ENCODE measurements at regions of chr11 and their contacts with region 1.

Region 1: GRCh38 chr11:59542142-59542810 is 30.9 kb downstream of the OR4D9 start:
- DNase-seq: no peak
- H3K4me3 Mint-ChIP-seq: no peak overlapping the region
- H3K27ac Mint-ChIP-seq: no peak overlapping the region
- H3K4me1 Mint-ChIP-seq: peaks cover 11% of the 10 kb centered on the region
- H3K27me3 Mint-ChIP-seq: no peaks in the 10 kb centered on the region

Region 2: GRCh38 chr11:59263225-59263894 is 278.9 kb before region 1 on chr11:
- CTCF ChIA-PET with region 1: no interaction called
- intact Hi-C with region 1: no loop called
- DNase-seq: peak; percentile 27
- H3K4me3 Mint-ChIP-seq: no peak overlapping the region
- H3K27ac Mint-ChIP-seq: no peak overlapping the region
- H3K4me1 Mint-ChIP-seq: no peaks in the 10 kb centered on the region
- H3K27me3 Mint-ChIP-seq: no peaks in the 10 kb centered on the region

Region 3: GRCh38 chr11:59401262-59401552 is 141.1 kb before region 1 on chr11:
- CTCF ChIA-PET with region 1: no interaction called
- intact Hi-C with region 1: no loop called
- DNase-seq: no peak
- H3K4me3 Mint-ChIP-seq: no peak overlapping the region
- H3K27ac Mint-ChIP-seq: no peak overlapping the region
- H3K4me1 Mint-ChIP-seq: no peaks in the 10 kb centered on the region
- H3K27me3 Mint-ChIP-seq: peaks cover 14% of the 10 kb centered on the region

Region 4: GRCh38 chr11:59680287-59681154 is 138.2 kb after region 1 on chr11:
- CTCF ChIA-PET with region 1: interaction called, 5 read pairs
- intact Hi-C with region 1: loop called (anchors 1 kb)
- DNase-seq: peak; percentile 70
- H3K4me3 Mint-ChIP-seq: no peak overlapping the region
- H3K27ac Mint-ChIP-seq: no peak overlapping the region
- H3K4me1 Mint-ChIP-seq: no peaks in the 10 kb centered on the region
- H3K27me3 Mint-ChIP-seq: peaks cover 6% of the 10 kb centered on the region

Region 5: GRCh38 chr11:59802639-59803176 is 260.4 kb after region 1 on chr11:
- CTCF ChIA-PET with region 1: no interaction called
- intact Hi-C with region 1: loop called (anchors 1 kb)
- DNase-seq: peak; percentile 53
- H3K4me3 Mint-ChIP-seq: no peak overlapping the region
- H3K27ac Mint-ChIP-seq: no peak overlapping the region
- H3K4me1 Mint-ChIP-seq: no peaks in the 10 kb centered on the region
- H3K27me3 Mint-ChIP-seq: no peaks in the 10 kb centered on the region

Region 6: GRCh38 chr11:59918987-59919589 is 376.8 kb after region 1 on chr11:
- CTCF ChIA-PET with region 1: no interaction called
- intact Hi-C with region 1: loop called (anchors 2 kb)
- DNase-seq: peak; percentile 46
- H3K4me3 Mint-ChIP-seq: no peak overlapping the region
- H3K27ac Mint-ChIP-seq: no peak overlapping the region
- H3K4me1 Mint-ChIP-seq: no peaks in the 10 kb centered on the region
- H3K27me3 Mint-ChIP-seq: peaks cover 4% of the 10 kb centered on the region

Measured in activated naive CD4-positive, alpha-beta T cell treated with anti-CD3 and anti-CD28 coated beads for 36 hours (primary cell).